CD4-positive, alpha-beta memory T cell (primary cell): ENCODE measurements at regions of chr4 and their contacts with region 1.

Region 1: GRCh38 chr4:105520817-105521790 is 31.3 kb upstream of the ARHGEF38 start:
- DNase-seq: peak in 3 of 5 donors; percentile 2 to 6 (median 4)
- H3K4me3 ChIP-seq: no peak overlapping the region
- H3K4me3 Mint-ChIP-seq: no peak overlapping the region
- H3K27ac ChIP-seq: no peak overlapping the region
- H3K27ac Mint-ChIP-seq: no peak overlapping the region
- H3K4me1 ChIP-seq: no peaks in the 10 kb centered on the region
- H3K4me1 Mint-ChIP-seq: no peaks in the 10 kb centered on the region
- H3K27me3 ChIP-seq: no peaks in the 10 kb centered on the region
- H3K27me3 Mint-ChIP-seq: peaks cover 3 to 4% of the 10 kb centered on the region in 2 donors

Region 2: DNA sequence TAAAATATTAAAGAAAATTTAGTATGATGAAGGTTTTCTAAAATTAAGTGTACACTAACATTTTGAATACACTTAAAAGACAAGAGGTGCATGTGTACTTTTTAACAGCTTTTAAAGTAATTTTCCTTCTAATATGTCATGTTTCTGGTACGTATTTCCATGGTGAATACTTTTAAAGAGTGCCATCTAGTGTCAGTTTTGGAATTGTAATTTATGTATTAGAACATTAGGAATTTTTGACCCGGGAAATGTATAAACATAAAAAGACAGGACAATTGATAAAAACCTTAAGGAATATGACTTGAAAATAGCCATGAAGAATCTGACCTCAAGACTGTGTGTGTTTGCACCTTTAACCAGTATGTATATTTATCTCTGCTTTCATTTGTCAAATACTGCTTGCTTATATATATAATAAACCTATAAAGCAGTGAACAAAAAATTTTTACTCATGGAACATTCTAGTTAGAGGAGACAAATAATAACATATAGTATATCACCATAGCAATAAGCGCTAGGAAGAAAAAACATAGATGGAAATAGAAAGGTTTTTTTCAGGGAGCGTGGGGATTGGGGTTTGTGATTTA is 194.7 kb after region 1 on chr4:
- CTCF ChIA-PET with region 1: interaction called, 3 read pairs
- POLR2A ChIA-PET with region 1: no interaction called
- intact Hi-C with region 1: loop called (anchors 1 kb)
- DNase-seq: peak in 4 of 5 donors; percentile 17 to 19 (median 18)
- H3K4me3 ChIP-seq: no peak overlapping the region
- H3K4me3 Mint-ChIP-seq: peak overlapping the region in 1 of 8 donors; percentile 26
- H3K27ac ChIP-seq: no peak overlapping the region
- H3K27ac Mint-ChIP-seq: peak overlapping the region in 1 of 7 donors; percentile 80
- H3K4me1 ChIP-seq: peaks cover 4% of the 10 kb centered on the region
- H3K4me1 Mint-ChIP-seq: peaks cover 0 to 2% (median 1%) of the 10 kb centered on the region in 4 donors
- H3K27me3 ChIP-seq: no peaks in the 10 kb centered on the region
- H3K27me3 Mint-ChIP-seq: no peaks in the 10 kb centered on the region

Region 3: GRCh38 chr4:106201373-106201772 is 680.3 kb after region 1 on chr4:
- CTCF ChIA-PET with region 1: no interaction called
- POLR2A ChIA-PET with region 1: no interaction called
- intact Hi-C with region 1: loop called (anchors 5 kb)
- DNase-seq: no peak
- H3K4me3 ChIP-seq: no peak overlapping the region
- H3K4me3 Mint-ChIP-seq: no peak overlapping the region
- H3K27ac ChIP-seq: no peak overlapping the region
- H3K27ac Mint-ChIP-seq: no peak overlapping the region
- H3K4me1 ChIP-seq: no peaks in the 10 kb centered on the region
- H3K4me1 Mint-ChIP-seq: no peaks in the 10 kb centered on the region
- H3K27me3 ChIP-seq: no peaks in the 10 kb centered on the region
- H3K27me3 Mint-ChIP-seq: no peaks in the 10 kb centered on the region